ENCODE measurements at regions of chr16 and their contacts with region 1.

Region 1: GRCh38 chr16:53549970-53550690 is 47.1 kb upstream of the AKTIP start:
- DNase-seq: peak; percentile 81
- H3K4me3 Mint-ChIP-seq: no peak overlapping the region
- H3K27ac Mint-ChIP-seq: no peak overlapping the region
- H3K4me1 Mint-ChIP-seq: peaks cover 6% of the 10 kb centered on the region
- H3K27me3 Mint-ChIP-seq: no peaks in the 10 kb centered on the region
- CTCF ChIP-seq: peak; percentile 69

Region 2: GRCh38 chr16:53297477-53297876 is 252.7 kb before region 1 on chr16:
- CTCF ChIA-PET with region 1: no interaction called
- POLR2A ChIA-PET with region 1: no interaction called
- intact Hi-C with region 1: no loop called
- DNase-seq: no peak
- H3K4me3 Mint-ChIP-seq: no peak overlapping the region
- H3K27ac Mint-ChIP-seq: peak overlapping the region; percentile 27
- H3K4me1 Mint-ChIP-seq: no peaks in the 10 kb centered on the region
- H3K27me3 Mint-ChIP-seq: no peaks in the 10 kb centered on the region
- CTCF ChIP-seq: no peak

Region 3: DNA sequence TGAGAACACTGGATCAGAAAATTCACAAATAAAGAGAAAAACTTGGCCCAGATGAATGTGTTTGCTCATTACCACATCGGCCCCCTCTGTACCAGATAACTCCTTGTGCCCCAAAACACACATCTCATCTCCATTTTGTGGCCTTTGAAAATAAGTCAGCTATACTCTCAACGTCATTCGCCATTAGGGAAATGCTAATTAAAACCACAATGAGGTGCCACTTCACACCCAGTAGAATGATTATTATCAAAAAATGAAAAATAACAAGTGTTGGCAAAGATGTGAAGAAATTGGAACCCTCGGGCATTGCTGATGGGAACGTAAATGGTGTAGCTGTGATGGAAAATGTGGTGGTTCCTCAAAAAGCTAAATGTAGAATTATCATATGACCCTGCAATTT is 12.5 kb before region 1 on chr16:
- CTCF ChIA-PET with region 1: interaction called, 13 read pairs
- POLR2A ChIA-PET with region 1: no interaction called
- intact Hi-C with region 1: no loop called
- DNase-seq: no peak
- H3K4me3 Mint-ChIP-seq: no peak overlapping the region
- H3K27ac Mint-ChIP-seq: no peak overlapping the region
- H3K4me1 Mint-ChIP-seq: no peaks in the 10 kb centered on the region
- H3K27me3 Mint-ChIP-seq: no peaks in the 10 kb centered on the region
- CTCF ChIP-seq: no peak

Region 4: DNA sequence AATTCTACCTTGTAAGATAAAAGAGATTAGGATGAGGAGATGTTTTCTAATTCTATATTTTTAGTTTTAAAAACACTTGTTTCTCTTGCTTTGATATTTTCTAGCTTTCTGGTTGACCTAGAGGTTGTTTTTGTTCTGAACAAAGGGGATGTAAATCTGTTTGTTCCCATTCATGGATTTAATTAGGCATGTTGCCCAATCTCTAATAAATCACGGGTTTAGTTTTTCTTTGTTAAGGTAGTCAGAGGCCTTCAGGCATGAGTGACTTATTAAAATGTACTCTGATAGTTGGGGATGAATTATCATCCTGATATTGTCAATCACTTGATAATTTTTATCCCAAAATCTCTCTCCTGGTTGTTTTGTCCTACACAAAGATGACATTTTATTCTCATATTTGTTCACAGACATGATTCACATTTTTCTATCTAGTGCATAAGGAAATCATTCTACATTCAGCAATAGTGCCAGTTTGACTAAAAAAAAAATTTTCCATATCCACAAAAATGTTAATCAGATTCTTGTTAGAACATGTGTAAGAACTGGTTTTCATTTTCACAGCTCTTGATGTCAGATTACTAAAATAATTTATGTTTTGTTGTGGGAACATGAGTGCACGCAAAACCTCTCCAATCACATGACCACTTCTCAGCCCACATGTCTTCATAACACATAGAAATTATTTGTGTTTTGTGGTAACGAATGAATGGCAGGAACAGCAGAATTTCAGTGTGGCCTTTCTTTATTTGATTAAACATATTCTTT is 48.6 kb after region 1 on chr16:
- CTCF ChIA-PET with region 1: no interaction called
- POLR2A ChIA-PET with region 1: no interaction called
- intact Hi-C with region 1: no loop called
- DNase-seq: no peak
- H3K4me3 Mint-ChIP-seq: no peak overlapping the region
- H3K27ac Mint-ChIP-seq: no peak overlapping the region
- H3K4me1 Mint-ChIP-seq: no peaks in the 10 kb centered on the region
- H3K27me3 Mint-ChIP-seq: no peaks in the 10 kb centered on the region
- CTCF ChIP-seq: no peak

Region 5: DNA sequence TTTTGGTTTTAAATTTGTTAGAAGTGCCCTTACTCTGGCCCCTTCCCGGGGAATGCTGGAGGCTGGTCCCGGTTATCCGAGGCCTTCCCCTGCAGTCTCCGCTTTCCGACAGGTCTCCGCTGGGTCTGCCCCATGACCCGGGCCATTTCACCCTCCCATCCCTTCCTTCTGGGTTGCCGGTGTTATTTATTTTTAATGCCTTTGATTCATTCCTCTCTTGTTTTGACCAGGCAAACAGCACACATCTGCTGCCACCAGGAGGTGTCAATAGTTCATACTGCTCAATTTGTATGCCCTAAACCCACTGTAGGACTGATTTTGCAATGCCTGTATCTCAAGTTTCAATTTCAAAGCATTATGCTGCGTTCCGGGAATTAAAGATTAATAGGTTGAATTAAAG is 1267.3 kb after region 1 on chr16:
- CTCF ChIA-PET with region 1: no interaction called
- POLR2A ChIA-PET with region 1: no interaction called
- intact Hi-C with region 1: loop called (anchors 1 kb)
- DNase-seq: peak; percentile 69
- H3K4me3 Mint-ChIP-seq: no peak overlapping the region
- H3K27ac Mint-ChIP-seq: no peak overlapping the region
- H3K4me1 Mint-ChIP-seq: no peaks in the 10 kb centered on the region
- H3K27me3 Mint-ChIP-seq: no peaks in the 10 kb centered on the region
- CTCF ChIP-seq: peak; percentile 42